Activated CD4-positive, alpha-beta T cell treated with anti-CD3 and anti-CD28 coated beads for 36 hours (primary cell): ENCODE measurements at regions of chr12 and their contacts with region 1.

Region 1: DNA sequence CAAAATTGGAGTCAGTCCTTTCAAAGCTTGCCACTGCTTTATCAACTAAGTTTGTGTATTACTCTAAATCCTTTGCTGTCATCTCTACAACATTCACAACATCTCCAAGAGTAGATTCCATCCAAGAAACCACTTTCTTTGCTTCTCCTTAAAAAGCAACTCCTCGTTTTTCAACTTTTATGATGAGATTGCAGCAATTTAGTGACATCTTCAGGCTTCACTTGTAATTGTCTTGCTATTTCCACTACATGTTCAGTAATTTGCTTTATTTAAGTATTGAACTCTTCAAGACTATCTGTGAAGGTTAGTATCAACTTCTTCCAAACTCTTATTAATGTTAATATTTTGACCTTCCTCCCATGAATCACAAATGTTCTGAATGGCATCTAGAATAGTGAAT is 747.9 kb downstream of the TMTC2 start:
- DNase-seq: no peak
- ATAC-seq: no peak
- H3K4me3 Mint-ChIP-seq: no peak overlapping the region
- H3K27ac Mint-ChIP-seq: no peak overlapping the region
- H3K4me1 Mint-ChIP-seq: no peaks in the 10 kb centered on the region
- H3K27me3 Mint-ChIP-seq: no peaks in the 10 kb centered on the region

Region 2: DNA sequence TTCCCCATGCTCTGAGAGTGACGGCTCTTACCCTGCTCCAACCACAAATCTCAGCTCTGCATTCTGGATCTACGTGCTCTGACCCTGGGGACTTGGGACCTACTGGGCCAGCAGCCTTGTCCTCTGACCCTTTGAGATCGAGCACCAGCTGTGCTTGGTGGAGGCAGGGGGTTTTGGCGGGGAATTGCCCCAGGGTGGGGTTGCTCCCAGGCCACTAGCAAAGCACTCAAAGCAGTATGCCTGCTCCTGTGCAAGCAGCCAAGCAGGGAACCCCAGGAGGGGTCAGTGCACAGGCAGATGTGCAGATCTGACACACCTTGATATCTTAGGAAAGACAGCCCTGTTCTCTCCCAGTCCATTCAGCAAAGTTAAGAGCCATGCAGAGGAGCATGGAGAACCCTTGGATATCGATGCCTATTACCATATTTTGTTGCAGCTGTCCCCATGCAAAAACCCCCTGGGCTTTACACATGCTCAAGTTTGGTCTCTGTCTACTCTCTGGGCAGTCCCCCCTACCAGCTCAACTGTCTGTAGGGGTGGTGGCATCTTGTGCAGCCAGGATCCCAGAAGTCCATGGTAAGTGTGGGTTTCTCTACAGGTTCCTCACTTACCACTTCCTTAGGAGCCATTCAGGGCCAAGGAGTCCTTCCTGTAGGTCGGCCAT is 428.9 kb before region 1 on chr12:
- CTCF ChIA-PET with region 1: no interaction called
- POLR2A ChIA-PET with region 1: no interaction called
- intact Hi-C with region 1: loop called in 1 of 2 experiments (anchors 10 kb)
- DNase-seq: no peak
- ATAC-seq: no peak
- H3K4me3 Mint-ChIP-seq: no peak overlapping the region
- H3K27ac Mint-ChIP-seq: no peak overlapping the region
- H3K4me1 Mint-ChIP-seq: no peaks in the 10 kb centered on the region
- H3K27me3 Mint-ChIP-seq: no peaks in the 10 kb centered on the region